Heart right ventricle (tissue), 16 donors: ENCODE measurements at regions of chr9 and their contacts with region 1.

Region 1: GRCh38 chr9:91451519-91452270 is 28.1 kb upstream of the NFIL3 start:
- DNase-seq: no peak
- ATAC-seq: no peak
- H3K4me3 ChIP-seq: no peak overlapping the region
- H3K27ac ChIP-seq: no peak overlapping the region
- H3K4me1 ChIP-seq: no peaks in the 10 kb centered on the region
- H3K27me3 ChIP-seq: no peaks in the 10 kb centered on the region
- CTCF ChIP-seq: no peak

Region 2: GRCh38 chr9:91395553-91396471 is 55.9 kb before region 1 on chr9:
- intact Hi-C with region 1: no loop called
- DNase-seq: no peak
- ATAC-seq: no peak
- H3K4me3 ChIP-seq: no peak overlapping the region
- H3K27ac ChIP-seq: peak overlapping the region in 1 of 10 donors; percentile 33
- H3K4me1 ChIP-seq: peaks cover 0 to 24% (median 0%) of the 10 kb centered on the region in 9 donors
- H3K27me3 ChIP-seq: no peaks in the 10 kb centered on the region
- CTCF ChIP-seq: no peak

Region 3: GRCh38 chr9:91522481-91522880 is 70.8 kb after region 1 on chr9:
- intact Hi-C with region 1: loop called in 1 of 10 experiments (anchors 10 kb)
- DNase-seq: no peak
- ATAC-seq: peak in 2 of 8 donors; percentile 28 to 37
- H3K4me3 ChIP-seq: no peak overlapping the region
- H3K27ac ChIP-seq: no peak overlapping the region
- H3K4me1 ChIP-seq: no peaks in the 10 kb centered on the region
- H3K27me3 ChIP-seq: no peaks in the 10 kb centered on the region
- CTCF ChIP-seq: no peak